Astrocyte of the cerebellum (primary cell): ENCODE measurements at regions of chr4 and their contacts with region 1.

Region 1: DNA sequence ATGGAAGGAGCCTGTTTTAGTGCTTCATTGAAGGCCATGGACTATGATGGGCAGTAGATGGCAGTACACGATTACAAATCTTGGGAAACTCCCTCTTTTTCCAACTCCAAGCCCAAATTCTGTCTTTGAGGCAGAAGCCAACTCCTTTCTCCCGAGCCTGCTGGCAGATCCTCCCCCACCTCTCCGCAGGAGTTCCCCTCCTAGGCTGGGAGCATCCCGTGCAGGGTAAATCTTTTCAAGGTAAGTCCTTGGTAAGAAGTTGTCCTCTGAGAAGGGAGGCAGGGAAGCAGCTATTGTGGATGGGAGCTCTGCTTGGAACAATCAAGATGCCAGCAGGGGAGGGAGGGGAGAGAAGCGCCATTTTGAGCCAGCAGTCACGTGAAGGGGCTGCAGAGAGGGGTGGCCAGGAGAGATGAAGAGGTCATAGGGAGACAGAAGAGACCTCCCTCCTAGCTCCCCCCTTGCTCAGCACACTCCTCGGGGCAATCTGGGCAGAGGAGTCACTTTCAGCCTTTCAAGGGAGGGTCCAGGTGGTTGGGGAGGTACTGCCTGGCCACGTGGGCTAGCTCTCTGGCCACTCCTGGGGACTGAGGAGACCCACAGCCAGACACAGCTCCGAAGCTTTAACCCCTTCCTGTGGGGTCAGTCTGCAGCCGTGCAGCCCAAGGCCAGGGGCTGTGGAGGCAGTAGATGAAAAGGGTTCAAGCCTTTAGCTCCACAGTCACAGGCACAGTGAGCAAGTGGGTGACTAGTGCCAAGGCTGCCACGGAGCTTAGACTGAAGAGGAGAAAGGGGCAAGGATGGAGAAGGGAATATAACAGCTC is 9.6 kb downstream of the CC2D2A start:
- DNase-seq: peak; percentile 83
- H3K4me3 ChIP-seq: peak overlapping the region; percentile 62
- CTCF ChIP-seq: peak; percentile 76

Region 2: DNA sequence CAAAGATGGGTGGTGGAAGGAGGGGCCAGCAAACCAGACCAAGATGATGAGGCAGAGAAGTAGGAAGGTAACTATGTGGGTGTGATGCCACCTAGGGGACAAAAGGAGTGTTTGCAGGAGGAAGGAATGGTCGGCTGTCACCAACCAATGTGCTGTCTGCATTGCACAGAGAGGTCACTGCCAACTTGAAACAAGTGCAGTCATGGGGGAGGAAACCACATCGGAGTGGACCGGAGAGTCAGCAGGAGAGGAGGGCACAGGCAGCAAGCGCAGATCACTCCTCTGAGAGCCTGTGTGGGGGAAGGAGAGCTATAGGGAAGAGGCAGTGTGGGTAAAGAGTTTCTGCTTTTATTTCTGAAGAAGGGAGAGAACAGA is 522.2 kb after region 1 on chr4:
- in situ Hi-C with region 1: loop called (anchors 25 kb)
- DNase-seq: peak; percentile 53
- H3K4me3 ChIP-seq: no peak overlapping the region
- CTCF ChIP-seq: peak; percentile 87